Aorta (tissue), 5 donors: ENCODE measurements at regions of chr14 and their contacts with region 1.

Region 1: DNA sequence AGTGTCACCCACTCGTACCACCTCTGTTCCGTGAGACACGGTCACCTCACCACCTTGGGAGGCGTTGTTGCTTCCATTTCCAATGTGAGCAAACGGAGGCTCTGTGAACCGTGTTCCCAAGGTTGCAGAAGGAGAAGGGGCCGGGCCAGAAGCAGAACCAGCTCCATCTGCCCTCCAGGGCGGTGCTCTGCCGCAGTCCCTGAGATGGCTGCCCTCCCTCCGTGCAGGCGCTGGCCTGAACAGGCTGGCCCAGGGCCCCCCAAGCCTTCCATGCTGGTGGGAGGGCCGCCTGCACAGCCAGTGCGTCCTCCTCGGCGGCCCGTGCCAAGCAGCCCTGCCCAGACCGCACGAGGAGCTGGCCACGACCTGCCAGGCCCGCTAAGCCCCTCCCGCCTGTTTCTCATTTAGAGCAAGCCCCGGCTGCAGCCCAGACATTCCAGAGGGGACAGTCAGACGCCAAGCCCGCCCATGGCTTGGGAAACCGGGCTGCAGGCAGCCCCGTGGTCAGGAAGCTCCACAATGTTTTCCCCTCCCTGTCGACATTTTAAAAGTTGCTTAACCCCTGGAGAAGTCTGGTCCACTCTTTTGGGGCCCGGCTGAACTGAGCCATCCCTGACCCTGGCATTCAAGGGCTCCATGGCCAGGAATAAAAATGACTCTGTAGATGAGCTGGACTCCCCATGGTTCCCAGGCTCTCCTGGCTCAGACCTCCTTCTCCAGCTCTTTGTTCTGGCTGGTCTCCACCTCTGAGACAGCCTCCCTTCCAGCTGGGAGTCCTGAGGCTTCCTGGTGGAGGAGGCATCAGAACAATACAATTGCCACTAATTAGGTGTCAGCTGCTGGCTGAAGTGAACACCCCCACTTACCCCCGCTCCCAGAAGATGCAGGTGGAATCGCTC is 236.0 kb downstream of the BCL11B start:
- DNase-seq: peak; percentile 97
- ATAC-seq: peak; percentile 94
- H3K4me3 ChIP-seq: no peak overlapping the region
- H3K27ac ChIP-seq: peak overlapping the region; percentile 46 to 85
- H3K4me1 ChIP-seq: peaks cover 0 to 2% of the 10 kb centered on the region in 2 donors
- H3K27me3 ChIP-seq: no peaks in the 10 kb centered on the region

Region 2: DNA sequence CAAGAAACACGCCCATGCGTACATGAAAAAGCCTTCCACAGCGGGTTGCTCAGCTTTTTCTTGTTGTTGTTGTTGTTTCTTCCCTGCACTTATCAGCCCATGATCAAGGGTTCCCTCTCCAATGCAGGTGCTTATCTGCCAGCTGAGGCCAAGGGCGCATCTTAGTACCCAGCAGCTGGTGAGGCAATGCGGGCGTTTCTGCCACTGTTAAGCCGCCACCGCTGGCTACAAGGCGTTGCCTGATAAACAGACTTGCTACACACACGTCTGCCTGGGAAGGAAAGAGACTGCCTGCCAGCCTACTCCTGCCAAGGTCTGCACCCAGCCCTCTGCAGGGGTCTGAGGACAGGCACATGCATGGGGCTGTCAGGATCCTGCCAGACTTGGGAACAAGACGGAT is 109.8 kb before region 1 on chr14:
- intact Hi-C with region 1: loop called in 1 of 2 experiments (anchors 5 kb)
- DNase-seq: peak; percentile 61 to 67
- ATAC-seq: no peak
- H3K4me3 ChIP-seq: no peak overlapping the region
- H3K27ac ChIP-seq: no peak overlapping the region
- H3K4me1 ChIP-seq: no peaks in the 10 kb centered on the region
- H3K27me3 ChIP-seq: no peaks in the 10 kb centered on the region

Region 3: DNA sequence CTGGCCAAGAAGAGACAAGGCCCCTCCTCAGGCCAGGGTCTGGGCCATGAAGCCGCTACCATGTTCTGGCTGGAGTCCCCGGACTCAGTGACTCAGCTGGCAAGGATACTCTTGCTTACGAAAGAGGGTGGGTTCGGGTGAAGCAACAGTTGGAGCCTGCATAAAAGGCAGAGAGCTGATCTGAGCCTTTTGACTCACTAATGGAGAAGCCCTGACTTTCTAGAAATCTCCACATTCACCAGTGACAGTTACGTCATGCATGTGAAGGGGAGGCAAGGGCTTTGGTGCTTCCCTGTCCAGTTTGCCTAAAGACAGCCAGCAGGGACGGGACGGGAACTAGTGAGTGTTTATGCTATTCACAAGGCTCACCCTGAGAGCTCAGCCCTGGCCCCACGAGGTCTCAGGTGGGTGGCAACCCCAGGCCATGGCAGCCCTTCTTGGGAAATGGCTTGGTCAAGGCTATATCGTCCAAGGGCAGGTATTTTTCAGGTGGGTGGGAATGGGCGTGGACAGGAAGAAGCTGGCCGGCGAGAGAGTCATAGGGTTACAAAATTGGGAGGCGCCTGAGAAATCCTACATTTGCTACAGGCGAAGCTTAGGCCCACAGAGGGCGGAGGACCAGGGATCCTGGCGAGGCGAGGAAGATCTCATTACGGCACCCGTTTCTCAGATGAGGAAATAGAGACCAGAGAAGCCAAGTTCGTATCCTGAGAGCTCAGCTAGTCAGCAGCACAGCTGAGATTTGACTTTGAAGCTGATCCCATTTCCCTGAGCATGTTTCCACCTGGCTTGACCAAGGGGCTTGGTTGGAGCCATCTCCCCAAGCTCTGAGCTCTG is 78.5 kb before region 1 on chr14:
- intact Hi-C with region 1: loop called in 1 of 2 experiments (anchors 2 kb)
- DNase-seq: peak; percentile 76 to 84
- ATAC-seq: peak; percentile 83
- H3K4me3 ChIP-seq: no peak overlapping the region
- H3K27ac ChIP-seq: no peak overlapping the region
- H3K4me1 ChIP-seq: no peaks in the 10 kb centered on the region
- H3K27me3 ChIP-seq: no peaks in the 10 kb centered on the region

Region 4: GRCh38 chr14:99215277-99215676 is 179.3 kb after region 1 on chr14:
- intact Hi-C with region 1: loop called in 1 of 2 experiments (anchors 5 kb)
- DNase-seq: peak; percentile 59 to 64
- ATAC-seq: no peak
- H3K4me3 ChIP-seq: no peak overlapping the region
- H3K27ac ChIP-seq: no peak overlapping the region
- H3K4me1 ChIP-seq: no peaks in the 10 kb centered on the region
- H3K27me3 ChIP-seq: no peaks in the 10 kb centered on the region

Region 5: GRCh38 chr14:99604283-99604765 is 568.4 kb after region 1 on chr14:
- intact Hi-C with region 1: loop called in 1 of 2 experiments (anchors 10 kb)
- DNase-seq: peak; percentile 95 to 96
- ATAC-seq: peak; percentile 97
- H3K4me3 ChIP-seq: peak overlapping the region; percentile 74
- H3K27ac ChIP-seq: peak overlapping the region in 1 of 2 donors; percentile 36
- H3K4me1 ChIP-seq: no peaks in the 10 kb centered on the region
- H3K27me3 ChIP-seq: no peaks in the 10 kb centered on the region